Lower leg skin (tissue), 4 donors: ENCODE measurements at regions of chr2 and their contacts with region 1.

Region 1: DNA sequence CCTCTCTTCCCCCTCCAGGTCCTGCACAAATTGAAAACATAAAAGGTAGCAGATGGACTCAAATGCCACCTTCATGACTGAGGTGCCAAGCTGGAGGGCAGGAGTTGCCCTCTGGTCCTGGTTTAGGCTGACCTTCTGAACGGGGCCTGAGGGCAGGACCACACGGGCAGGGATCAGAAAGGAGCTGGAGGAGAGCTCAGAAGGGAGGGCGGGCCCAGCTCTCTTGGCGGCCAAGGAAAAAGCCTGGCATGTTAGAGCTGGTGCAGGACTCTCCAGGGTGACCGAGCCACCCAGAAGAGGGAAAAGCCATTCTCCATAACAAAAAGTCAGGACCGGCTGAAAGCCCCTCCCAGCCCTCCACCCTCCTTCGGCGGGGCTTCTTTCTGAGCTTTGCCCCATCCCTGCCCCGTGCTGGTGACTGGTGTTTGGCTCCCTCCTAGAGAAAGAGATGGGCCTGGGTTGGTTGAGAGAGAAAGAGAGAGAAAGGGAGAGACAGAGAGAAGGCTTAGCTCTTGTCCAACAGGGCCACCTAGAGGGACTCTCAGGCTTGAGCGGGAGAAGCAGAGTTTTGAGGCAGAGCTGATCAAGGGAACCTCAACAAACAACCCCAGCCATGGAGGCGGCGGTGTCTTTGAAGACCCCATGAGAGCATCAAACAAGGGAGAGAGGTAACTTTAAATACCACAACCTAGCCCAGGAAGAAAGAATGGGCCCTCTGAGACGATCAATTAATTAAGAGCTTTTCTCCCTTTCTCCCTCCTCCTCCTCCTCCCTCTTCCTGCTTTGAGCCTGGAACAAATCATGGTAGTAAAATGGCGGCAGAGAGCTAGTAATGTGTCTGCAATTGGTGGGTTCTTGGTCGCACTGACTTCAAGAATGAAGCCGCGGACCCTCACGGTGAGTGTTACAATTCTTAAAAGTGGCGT is 50.8 kb downstream of the WIPF1 start:
- DNase-seq: no peak
- H3K4me3 ChIP-seq: no peak overlapping the region
- CTCF ChIP-seq: no peak
- POLR2A ChIP-seq: no peak

Region 2: GRCh38 chr2:174461221-174461620 is 85.6 kb before region 1 on chr2:
- intact Hi-C with region 1: loop called (anchors 5 kb)
- DNase-seq: no peak
- H3K4me3 ChIP-seq: no peak overlapping the region
- CTCF ChIP-seq: no peak
- POLR2A ChIP-seq: no peak

Region 3: DNA sequence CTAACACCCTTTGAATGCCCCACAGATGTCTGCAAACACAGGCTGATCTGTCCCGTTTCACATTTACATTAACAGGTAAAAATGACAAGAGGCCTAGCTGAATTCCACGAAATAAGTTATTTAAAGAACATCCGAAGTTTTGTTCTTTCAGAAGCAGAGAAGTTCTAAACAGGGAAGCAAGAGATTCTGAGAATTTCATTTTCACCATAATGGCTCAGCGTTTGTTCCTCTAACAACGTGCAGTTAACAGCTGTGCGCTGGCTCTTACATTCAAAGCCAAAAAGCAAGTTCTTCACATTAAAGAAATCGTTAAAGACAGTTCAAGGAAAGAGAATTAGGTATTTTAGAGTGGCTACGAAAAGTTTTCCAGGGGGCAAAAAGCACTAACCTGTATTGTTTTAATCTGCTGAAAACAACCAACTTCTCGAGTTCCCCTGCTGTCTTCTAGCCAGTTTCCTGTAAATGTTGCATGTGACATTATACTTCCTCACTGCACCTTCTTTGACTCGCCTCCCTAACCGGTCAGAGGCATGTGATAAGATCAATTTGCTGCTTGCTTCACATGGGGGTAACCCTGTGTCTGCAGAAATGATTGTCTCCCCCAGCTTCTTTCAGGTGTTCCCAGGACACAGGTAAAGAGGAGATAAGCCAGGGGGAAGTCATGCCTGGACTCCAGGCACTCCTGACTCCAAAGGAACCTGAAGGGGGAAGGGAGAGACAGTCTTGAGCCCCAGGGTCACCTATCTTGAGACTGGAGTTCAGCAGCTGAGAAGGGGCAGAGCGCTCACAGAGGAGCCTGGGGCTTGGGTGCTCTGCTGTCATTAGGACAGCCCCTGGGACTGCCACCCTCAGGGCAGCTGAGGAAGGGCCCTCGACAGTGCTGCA is 87.5 kb after region 1 on chr2:
- intact Hi-C with region 1: no loop called
- DNase-seq: no peak
- H3K4me3 ChIP-seq: no peak overlapping the region
- CTCF ChIP-seq: no peak
- POLR2A ChIP-seq: peak in 1 of 2 donors; percentile 45

Region 4: DNA sequence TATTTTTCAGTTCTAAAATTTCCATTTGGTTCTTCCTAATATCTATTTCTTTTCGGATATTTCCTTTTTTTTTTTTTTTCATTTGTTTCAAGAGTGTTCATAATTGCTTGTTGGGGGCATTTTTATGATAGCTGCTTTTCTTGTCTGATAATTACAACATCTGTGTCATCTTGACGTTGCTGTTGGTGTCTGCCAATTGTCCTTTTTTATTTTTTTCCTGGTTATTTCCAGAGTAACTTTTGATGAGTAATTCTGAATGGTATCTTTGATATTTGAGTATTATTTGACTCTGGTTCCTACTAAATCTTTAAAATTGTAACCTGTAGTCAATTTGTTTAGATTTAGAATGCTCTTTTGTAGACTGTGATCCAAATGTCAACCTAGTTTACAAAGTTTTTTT is 268.7 kb after region 1 on chr2:
- intact Hi-C with region 1: no loop called
- DNase-seq: no peak
- H3K4me3 ChIP-seq: no peak overlapping the region
- CTCF ChIP-seq: no peak
- POLR2A ChIP-seq: no peak

Region 5: GRCh38 chr2:175062787-175063585 is 516.1 kb after region 1 on chr2:
- intact Hi-C with region 1: no loop called
- DNase-seq: no peak
- H3K4me3 ChIP-seq: no peak overlapping the region
- CTCF ChIP-seq: peak in 1 of 3 donors; percentile 97
- POLR2A ChIP-seq: no peak

Region 6: DNA sequence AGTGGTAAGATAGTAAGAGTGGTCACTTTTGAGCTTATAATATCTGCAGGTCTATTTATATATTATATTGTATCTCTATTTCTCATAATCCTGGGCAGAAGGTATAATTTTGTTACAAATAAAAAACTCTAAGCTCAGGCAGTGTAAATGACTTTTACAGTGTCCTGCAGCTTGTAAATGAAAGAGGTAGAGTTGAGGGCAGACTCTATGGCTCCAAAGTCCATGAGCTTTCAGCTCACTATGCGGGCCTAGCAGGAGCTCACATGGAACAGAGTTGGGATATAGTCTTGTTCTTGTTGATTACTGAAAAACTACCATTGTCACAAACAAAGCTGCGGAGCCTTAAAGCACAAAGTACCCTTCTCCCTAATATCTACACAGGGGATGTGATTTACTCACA is 1093.8 kb after region 1 on chr2:
- intact Hi-C with region 1: no loop called
- DNase-seq: no peak
- H3K4me3 ChIP-seq: no peak overlapping the region
- CTCF ChIP-seq: no peak
- POLR2A ChIP-seq: no peak